Gastrocnemius medialis (tissue), 4 donors: ENCODE measurements at regions of chr6 and their contacts with region 1.

Region 1: DNA sequence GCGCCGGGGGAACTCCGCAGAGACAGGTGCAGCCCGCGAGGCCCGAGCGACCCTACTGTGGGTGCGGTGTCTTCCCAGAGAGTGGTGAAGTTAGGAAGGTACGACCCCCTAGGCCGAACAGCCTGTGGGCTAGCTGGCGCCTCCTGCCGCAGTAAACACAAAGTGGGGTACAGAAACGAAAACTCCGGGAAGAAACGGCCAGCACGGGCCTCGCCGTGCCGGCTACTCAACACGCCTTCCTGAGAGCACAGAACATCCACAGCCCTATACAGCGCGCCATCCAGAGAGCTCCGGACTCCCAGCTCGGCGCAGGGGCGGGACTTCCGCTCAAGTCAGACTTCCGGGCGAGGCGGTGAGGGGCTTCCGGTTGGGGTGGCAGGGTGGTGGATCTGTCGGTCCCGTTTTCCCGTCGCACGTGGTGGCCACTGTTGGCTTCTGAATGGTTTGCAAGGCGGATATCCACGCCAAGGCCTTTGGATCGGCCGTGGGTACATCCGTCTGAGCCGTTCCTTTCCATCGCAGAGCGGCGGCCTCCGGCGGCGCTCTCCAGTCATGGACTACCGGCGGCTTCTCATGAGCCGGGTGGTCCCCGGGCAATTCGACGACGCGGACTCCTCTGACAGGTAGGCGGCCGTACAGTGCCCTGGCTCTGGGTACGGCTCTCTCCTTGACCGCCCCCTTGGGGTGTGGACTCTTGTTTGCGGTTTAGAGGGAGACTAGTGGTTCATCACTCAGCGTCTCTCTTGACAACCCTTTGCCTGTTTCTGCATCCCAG is at the starts of genes CAGE1 and RIOK1:
- DNase-seq: peak; percentile 90 to 92
- ATAC-seq: peak; percentile 96 to 98
- H3K4me3 ChIP-seq: peak within 1 kb of the TSS; percentile 86 to 99 (median 94)
- H3K27ac ChIP-seq: peak within 1 kb of the TSS; percentile 89 to 91 (median 90)
- H3K4me1 ChIP-seq: peaks cover 15 to 21% of the 10 kb centered on the region in 2 donors
- H3K27me3 ChIP-seq: no peaks in the 10 kb centered on the region
- CTCF ChIP-seq: no peak
- POLR2A ChIP-seq: peak; percentile 59 to 64
- total RNA-seq, gene CAGE1: not detected
- total RNA-seq, gene RIOK1: 13.6 to 22.6 (median 14.3) TPM

Region 2: GRCh38 chr6:6686748-6687601 is 702.7 kb before region 1 on chr6:
- in situ Hi-C with region 1: no loop called
- intact Hi-C with region 1: loop called (anchors 10 kb)
- DNase-seq: peak; percentile 80 to 91
- ATAC-seq: peak; percentile 83 to 86
- H3K4me3 ChIP-seq: peak overlapping the region; percentile 35 to 52 (median 38)
- H3K27ac ChIP-seq: peak overlapping the region; percentile 63 to 75 (median 70)
- H3K4me1 ChIP-seq: peaks cover 19 to 26% of the 10 kb centered on the region in 2 donors
- H3K27me3 ChIP-seq: no peaks in the 10 kb centered on the region
- CTCF ChIP-seq: no peak
- POLR2A ChIP-seq: no peak

Region 3: GRCh38 chr6:7300926-7301325 is 88.7 kb before region 1 on chr6:
- in situ Hi-C with region 1: loop called in 1 of 4 experiments (anchors 10 kb)
- intact Hi-C with region 1: no loop called
- DNase-seq: no peak
- ATAC-seq: no peak
- H3K4me3 ChIP-seq: no peak overlapping the region
- H3K27ac ChIP-seq: no peak overlapping the region
- H3K4me1 ChIP-seq: no peaks in the 10 kb centered on the region
- H3K27me3 ChIP-seq: no peaks in the 10 kb centered on the region
- CTCF ChIP-seq: no peak
- POLR2A ChIP-seq: no peak

Region 4: GRCh38 chr6:7312616-7313504 is 76.8 kb before region 1 on chr6 and contains the start of gene SSR1:
- in situ Hi-C with region 1: loop called in 1 of 4 experiments (anchors 10 kb)
- intact Hi-C with region 1: loop called (anchors 1 kb)
- DNase-seq: peak; percentile 95 to 96
- ATAC-seq: peak; percentile 95 to 97
- H3K4me3 ChIP-seq: peak within 1 kb of the TSS; percentile 83 to 100 (median 96)
- H3K27ac ChIP-seq: peak within 1 kb of the TSS; percentile 85 to 98 (median 96)
- H3K4me1 ChIP-seq: peaks cover 14 to 19% of the 10 kb centered on the region in 2 donors
- H3K27me3 ChIP-seq: no peaks in the 10 kb centered on the region
- CTCF ChIP-seq: no peak
- POLR2A ChIP-seq: peak; percentile 64 to 74
- total RNA-seq, gene SSR1: 11.8 to 36.8 (median 18.6) TPM

Region 5: GRCh38 chr6:7324520-7324919 is 65.1 kb before region 1 on chr6:
- in situ Hi-C with region 1: loop called in 1 of 4 experiments (anchors 10 kb)
- intact Hi-C with region 1: no loop called
- DNase-seq: peak in 1 of 2 donors; percentile 24
- ATAC-seq: peak in 1 of 2 donors; percentile 51
- H3K4me3 ChIP-seq: no peak overlapping the region
- H3K27ac ChIP-seq: no peak overlapping the region
- H3K4me1 ChIP-seq: no peaks in the 10 kb centered on the region
- H3K27me3 ChIP-seq: no peaks in the 10 kb centered on the region
- CTCF ChIP-seq: no peak
- POLR2A ChIP-seq: no peak

Region 6: GRCh38 chr6:7589949-7590917 is 200.6 kb after region 1 on chr6 and contains the start of gene SNRNP48:
- in situ Hi-C with region 1: no loop called
- intact Hi-C with region 1: loop called (anchors 5 kb)
- DNase-seq: peak; percentile 92 to 93
- ATAC-seq: peak; percentile 99
- H3K4me3 ChIP-seq: peak within 1 kb of the TSS; percentile 77 to 96 (median 86)
- H3K27ac ChIP-seq: peak within 1 kb of the TSS; percentile 65 to 82 (median 77)
- H3K4me1 ChIP-seq: peaks cover 21 to 23% of the 10 kb centered on the region in 2 donors
- H3K27me3 ChIP-seq: no peaks in the 10 kb centered on the region
- CTCF ChIP-seq: no peak
- POLR2A ChIP-seq: peak; percentile 69 to 70
- total RNA-seq, gene SNRNP48: 14.3 to 16.6 (median 15.3) TPM